Panc1 (cell line): ENCODE measurements at regions of chr5 and their contacts with region 1.

Region 1: DNA sequence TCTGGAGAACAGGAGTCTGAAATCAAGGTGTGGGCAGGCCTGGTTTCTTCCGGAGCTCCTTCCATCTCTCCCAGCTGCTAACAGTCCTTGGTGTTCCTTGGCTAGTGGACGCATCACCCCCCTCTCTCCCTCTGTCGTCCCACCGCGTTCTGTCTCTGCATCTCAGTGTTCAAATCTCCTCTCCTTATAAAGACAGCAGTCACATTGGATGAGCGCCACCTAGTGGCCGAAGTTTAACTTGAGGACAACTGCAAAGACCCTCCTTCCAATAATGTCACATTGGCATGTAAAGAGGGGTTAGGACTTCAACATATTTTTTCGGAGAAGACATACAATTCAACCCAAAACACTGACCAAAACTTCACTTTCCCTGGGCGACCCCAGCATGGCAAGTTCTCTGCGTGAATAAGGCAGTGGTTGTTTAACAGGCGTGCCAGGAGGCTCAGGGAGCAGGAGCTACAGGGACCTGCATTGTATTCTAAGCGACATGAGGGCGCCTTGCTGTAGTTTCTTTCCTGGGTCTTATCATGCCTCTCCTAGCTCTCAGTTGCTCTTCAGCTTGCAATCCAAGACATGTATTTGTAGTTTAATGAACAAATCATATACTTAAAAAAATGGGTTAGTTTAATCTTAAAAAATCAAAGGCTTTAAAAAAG is 27.9 kb upstream of the BASP1 start:
- DNase-seq: peak; percentile 86
- ATAC-seq: peak; percentile 90
- H3K4me3 ChIP-seq: peak overlapping the region in 1 of 2 experiments; percentile 36; a peak in 2 of 4 replicates
- H3K27ac ChIP-seq: peak overlapping the region; percentile 15; the same call in 1 of the 2 replicates
- H3K4me1 ChIP-seq: peaks cover 14% of the 10 kb centered on the region
- H3K27me3 ChIP-seq: no peaks in the 10 kb centered on the region
- CTCF ChIP-seq: peak; percentile 89

Region 2: DNA sequence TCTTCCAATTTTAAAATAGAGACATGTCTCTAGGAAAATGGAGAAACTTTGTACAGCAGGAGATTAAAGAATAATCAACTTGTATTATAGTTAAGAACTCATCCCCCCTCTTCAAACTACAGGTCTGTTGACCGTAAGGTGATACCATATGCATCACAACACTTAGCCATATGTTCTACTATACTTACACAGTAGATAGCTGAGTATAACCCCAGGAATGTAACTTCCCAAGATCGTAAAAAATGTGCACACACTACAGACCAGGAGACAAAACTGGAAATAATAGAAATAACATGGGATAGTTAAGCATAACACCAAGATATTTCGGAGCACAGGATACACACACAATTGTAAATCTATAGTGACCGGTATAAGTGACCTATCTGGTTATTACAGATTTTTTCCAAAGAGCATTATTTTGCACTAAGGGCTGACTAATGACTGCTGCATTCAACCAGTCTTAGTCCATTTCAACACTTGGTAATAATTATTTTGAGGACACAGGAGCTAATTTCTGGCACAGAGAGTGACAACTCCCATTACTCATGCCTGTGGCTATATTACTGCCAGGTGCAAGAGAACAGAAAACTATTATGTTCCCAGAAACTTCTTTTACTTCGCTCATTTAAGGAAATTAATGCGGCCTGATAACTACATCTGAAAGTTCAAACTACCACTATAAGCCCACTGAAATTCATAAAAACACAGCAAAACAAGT is 708.5 kb before region 1 on chr5:
- CTCF ChIA-PET with region 1: no interaction called
- POLR2A ChIA-PET with region 1: interaction called, 10 read pairs
- in situ Hi-C with region 1: no loop called
- intact Hi-C with region 1: no loop called
- DNase-seq: no peak
- ATAC-seq: no peak
- H3K4me3 ChIP-seq: no peak overlapping the region
- H3K27ac ChIP-seq: no peak overlapping the region
- H3K4me1 ChIP-seq: no peaks in the 10 kb centered on the region
- H3K27me3 ChIP-seq: peaks cover 7% of the 10 kb centered on the region; the same call in 1 of the 2 replicates
- CTCF ChIP-seq: no peak

Region 3: DNA sequence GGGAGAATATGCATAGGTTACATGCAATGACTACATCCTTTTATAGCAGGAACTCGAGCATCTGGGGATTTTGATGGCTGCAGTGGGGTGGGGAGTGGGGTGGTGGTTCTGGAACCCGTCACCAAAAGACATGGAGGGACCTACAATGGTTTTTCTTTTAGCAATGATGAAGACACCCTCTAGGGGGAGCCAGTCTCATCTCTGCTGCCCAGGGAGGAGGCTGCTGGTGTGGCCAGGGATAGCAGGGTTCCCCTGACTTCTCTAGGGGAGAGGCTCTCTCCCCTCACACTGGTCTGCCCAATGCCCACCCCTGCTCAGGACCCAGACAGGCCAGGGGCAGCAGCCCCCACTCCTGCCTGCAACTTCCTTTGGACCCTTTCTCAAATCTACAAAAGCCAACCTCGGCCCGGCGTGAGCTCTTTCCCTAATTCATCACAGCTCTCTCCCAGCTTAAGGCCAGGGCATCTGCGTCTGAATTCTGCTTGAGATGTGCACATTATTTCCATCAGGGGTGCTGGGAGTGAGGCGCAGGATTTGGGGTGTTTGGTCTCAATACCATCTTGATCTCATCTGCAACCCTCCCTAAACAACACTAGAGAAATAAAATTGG is 499.2 kb before region 1 on chr5:
- CTCF ChIA-PET with region 1: no interaction called
- POLR2A ChIA-PET with region 1: no interaction called
- in situ Hi-C with region 1: no loop called
- intact Hi-C with region 1: loop called (anchors 10 kb)
- DNase-seq: peak; percentile 20
- ATAC-seq: peak; percentile 92
- H3K4me3 ChIP-seq: no peak overlapping the region
- H3K27ac ChIP-seq: no peak overlapping the region
- H3K4me1 ChIP-seq: no peaks in the 10 kb centered on the region
- H3K27me3 ChIP-seq: no peaks in the 10 kb centered on the region
- CTCF ChIP-seq: peak; percentile 89

Region 4: DNA sequence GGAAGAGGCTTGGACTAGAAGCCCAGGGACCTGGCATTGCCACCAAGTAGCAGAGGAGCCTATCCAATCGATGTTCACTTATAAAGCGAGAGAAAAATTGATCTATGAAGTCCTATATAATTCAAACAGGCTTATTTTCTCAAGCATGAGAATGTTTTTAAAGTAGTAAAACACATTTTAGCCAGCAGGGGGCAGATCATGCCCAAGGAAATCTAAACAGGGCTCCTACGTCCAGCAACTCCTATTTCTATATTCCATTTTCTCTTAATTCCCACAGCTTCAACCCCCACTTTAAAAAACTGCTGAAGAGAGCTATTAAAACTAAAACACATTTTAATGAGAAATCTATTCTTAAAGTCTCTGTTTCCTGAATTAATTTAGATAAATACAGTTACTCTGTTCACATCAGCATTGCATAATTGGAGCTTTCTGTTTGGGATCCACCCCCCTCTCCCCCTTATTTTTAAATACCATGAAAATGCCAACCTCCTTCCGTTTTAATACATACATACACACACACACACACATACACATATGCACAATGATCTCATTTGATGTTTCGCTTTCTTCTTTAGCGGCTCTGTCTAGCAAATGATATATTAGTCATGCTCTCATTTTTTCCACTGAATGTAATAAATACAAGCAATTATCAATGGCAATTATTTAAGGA is 398.3 kb before region 1 on chr5:
- CTCF ChIA-PET with region 1: interaction called, 6 read pairs
- POLR2A ChIA-PET with region 1: no interaction called
- in situ Hi-C with region 1: no loop called
- intact Hi-C with region 1: loop called (anchors 1 kb)
- DNase-seq: peak; percentile 62
- ATAC-seq: peak; percentile 73
- H3K4me3 ChIP-seq: no peak overlapping the region
- H3K27ac ChIP-seq: peak overlapping the region; percentile 20
- H3K4me1 ChIP-seq: peaks cover 13% of the 10 kb centered on the region
- H3K27me3 ChIP-seq: no peaks in the 10 kb centered on the region
- CTCF ChIP-seq: peak; percentile 67; the same call in 1 of the 2 replicates

Region 5: GRCh38 chr5:16934123-16934522 is 255.4 kb before region 1 on chr5:
- CTCF ChIA-PET with region 1: interaction called, 9 read pairs
- POLR2A ChIA-PET with region 1: no interaction called
- in situ Hi-C with region 1: no loop called
- intact Hi-C with region 1: loop called (anchors 1 kb)
- DNase-seq: peak; percentile 77
- ATAC-seq: peak; percentile 76
- H3K4me3 ChIP-seq: peak overlapping the region; percentile 96 to 97
- H3K27ac ChIP-seq: peak overlapping the region; percentile 91
- H3K4me1 ChIP-seq: peaks cover 43% of the 10 kb centered on the region
- H3K27me3 ChIP-seq: peaks cover 9% of the 10 kb centered on the region
- CTCF ChIP-seq: peak; percentile 97

Region 6: DNA sequence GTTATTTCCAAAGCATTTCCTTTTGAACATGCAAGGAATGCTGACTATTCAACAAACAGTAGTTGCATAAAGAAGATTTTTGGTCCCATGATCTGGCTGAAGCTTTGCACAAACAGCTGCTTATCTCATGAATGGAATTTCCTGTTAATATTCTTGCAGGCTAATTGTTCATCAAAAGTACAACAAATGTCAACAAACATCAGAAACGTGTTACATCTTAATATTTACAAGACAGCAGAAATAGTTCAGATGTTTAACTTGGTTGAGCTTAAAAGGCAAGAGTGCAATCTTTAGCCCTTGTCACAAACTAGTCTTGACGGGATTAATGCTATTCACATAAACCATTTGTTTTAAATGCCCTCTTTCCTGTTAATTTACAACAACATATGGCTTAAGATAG is 20.0 kb before region 1 on chr5:
- CTCF ChIA-PET with region 1: no interaction called
- POLR2A ChIA-PET with region 1: no interaction called
- in situ Hi-C with region 1: no loop called
- intact Hi-C with region 1: no loop called
- DNase-seq: no peak
- ATAC-seq: no peak
- H3K4me3 ChIP-seq: no peak overlapping the region
- H3K27ac ChIP-seq: no peak overlapping the region
- H3K4me1 ChIP-seq: no peaks in the 10 kb centered on the region
- H3K27me3 ChIP-seq: no peaks in the 10 kb centered on the region
- CTCF ChIP-seq: no peak